ENCODE measurements at regions of chr6 and their contacts with region 1.

Region 1: DNA sequence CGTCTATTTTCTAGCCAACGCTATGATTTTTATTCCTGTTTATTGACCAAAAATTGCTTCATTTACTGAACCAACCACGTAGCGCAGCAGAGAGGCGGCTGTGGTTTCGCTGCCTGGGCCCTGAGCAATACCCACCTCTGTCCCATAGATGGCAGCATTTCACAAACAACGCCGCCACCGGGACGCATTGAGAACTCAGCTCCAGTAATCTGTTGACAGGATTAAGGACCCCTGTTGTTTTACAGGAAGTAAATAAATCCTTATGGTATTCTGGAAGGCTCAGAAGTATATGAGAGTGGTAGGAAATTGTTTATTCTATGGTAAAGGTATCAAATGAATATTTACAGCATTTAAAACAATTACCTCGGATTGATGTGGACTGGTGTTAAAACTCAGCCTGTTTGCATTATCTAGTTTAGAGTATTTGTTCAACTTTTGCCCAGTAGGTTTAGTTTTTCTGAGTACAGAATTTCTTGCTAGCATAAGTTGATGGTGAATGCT is 547.9 kb upstream of the SLC35B3 start:
- DNase-seq: peak; percentile 12 to 62 (median 25)
- ATAC-seq: peak; percentile 87
- H3K4me3 ChIP-seq: no peak overlapping the region
- H3K4me3 Mint-ChIP-seq: no peak overlapping the region
- H3K27ac ChIP-seq: no peak overlapping the region
- H3K27ac Mint-ChIP-seq: no peak overlapping the region
- H3K4me1 ChIP-seq: peaks cover 2% of the 10 kb centered on the region
- H3K4me1 Mint-ChIP-seq: no peaks in the 10 kb centered on the region
- H3K27me3 ChIP-seq: peaks cover 0 to 7% of the 10 kb centered on the region in 2 experiments
- H3K27me3 Mint-ChIP-seq: peaks cover 44% of the 10 kb centered on the region
- CTCF ChIP-seq: peak; percentile 99

Region 2: DNA sequence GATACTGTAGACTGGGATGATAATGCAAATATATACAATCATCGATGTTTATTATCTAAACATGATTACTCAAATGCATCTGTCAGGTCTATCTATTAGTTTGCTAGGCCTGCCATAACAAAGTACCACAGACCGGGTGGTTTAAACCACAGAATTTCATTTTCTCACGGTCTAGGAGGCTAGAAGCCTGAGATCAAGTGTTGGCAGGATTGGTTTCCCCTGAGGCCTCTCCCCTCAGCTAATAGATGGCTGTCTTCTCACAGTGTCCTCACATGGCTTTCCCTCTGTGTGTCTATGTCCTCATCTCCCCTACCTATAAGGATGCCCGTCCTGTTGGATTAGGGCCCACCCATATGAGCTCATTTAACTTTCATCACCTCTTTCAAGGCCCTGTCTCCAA is 35.3 kb before region 1 on chr6:
- CTCF ChIA-PET with region 1: no interaction called
- POLR2A ChIA-PET with region 1: no interaction called
- intact Hi-C with region 1: no loop called
- DNase-seq: no peak
- ATAC-seq: no peak
- H3K4me3 ChIP-seq: no peak overlapping the region
- H3K4me3 Mint-ChIP-seq: no peak overlapping the region
- H3K27ac ChIP-seq: no peak overlapping the region
- H3K27ac Mint-ChIP-seq: no peak overlapping the region
- H3K4me1 ChIP-seq: no peaks in the 10 kb centered on the region
- H3K4me1 Mint-ChIP-seq: no peaks in the 10 kb centered on the region
- H3K27me3 ChIP-seq: no peaks in the 10 kb centered on the region
- H3K27me3 Mint-ChIP-seq: peaks cover 8% of the 10 kb centered on the region
- CTCF ChIP-seq: no peak

Region 3: DNA sequence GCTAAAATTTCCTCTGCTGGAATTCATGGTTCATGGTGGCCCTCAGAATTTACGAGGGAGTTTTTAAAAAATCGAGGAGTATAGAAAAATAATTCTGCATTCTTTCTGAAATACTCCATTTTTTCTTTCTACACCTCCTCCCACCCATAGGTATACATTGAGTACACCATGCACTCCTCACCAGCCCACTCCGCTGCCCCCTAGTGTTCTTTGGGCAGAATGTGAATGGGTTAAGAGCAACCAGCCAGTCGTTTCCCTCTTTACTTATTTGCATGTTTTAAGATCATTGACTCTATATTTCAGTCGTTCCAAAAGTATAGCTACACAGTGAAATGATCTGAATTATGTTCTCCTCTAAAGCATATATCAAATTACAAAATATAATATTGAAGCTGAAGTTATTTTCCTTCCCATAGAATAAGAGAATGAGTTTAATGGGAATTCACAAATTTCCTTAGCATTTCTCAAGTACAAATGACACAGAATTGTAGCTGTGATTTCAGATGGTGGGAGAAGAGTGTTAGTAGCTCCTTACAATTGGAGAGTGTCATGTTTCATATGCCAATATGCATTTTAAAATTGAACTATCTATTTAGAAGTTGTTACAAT is 429.8 kb after region 1 on chr6:
- CTCF ChIA-PET with region 1: no interaction called
- POLR2A ChIA-PET with region 1: no interaction called
- intact Hi-C with region 1: loop called (anchors 1 kb)
- DNase-seq: peak in 2 of 14 experiments; percentile 1 to 11
- ATAC-seq: no peak
- H3K4me3 ChIP-seq: no peak overlapping the region
- H3K4me3 Mint-ChIP-seq: no peak overlapping the region
- H3K27ac ChIP-seq: no peak overlapping the region
- H3K27ac Mint-ChIP-seq: no peak overlapping the region
- H3K4me1 ChIP-seq: no peaks in the 10 kb centered on the region
- H3K4me1 Mint-ChIP-seq: no peaks in the 10 kb centered on the region
- H3K27me3 ChIP-seq: no peaks in the 10 kb centered on the region
- H3K27me3 Mint-ChIP-seq: peaks cover 5% of the 10 kb centered on the region
- CTCF ChIP-seq: peak; percentile 53

Region 4: GRCh38 chr6:9675122-9675521 is 691.9 kb after region 1 on chr6:
- CTCF ChIA-PET with region 1: no interaction called
- POLR2A ChIA-PET with region 1: no interaction called
- intact Hi-C with region 1: no loop called
- DNase-seq: no peak
- ATAC-seq: no peak
- H3K4me3 ChIP-seq: no peak overlapping the region
- H3K4me3 Mint-ChIP-seq: no peak overlapping the region
- H3K27ac ChIP-seq: no peak overlapping the region
- H3K27ac Mint-ChIP-seq: no peak overlapping the region
- H3K4me1 ChIP-seq: no peaks in the 10 kb centered on the region
- H3K4me1 Mint-ChIP-seq: no peaks in the 10 kb centered on the region
- H3K27me3 ChIP-seq: no peaks in the 10 kb centered on the region
- H3K27me3 Mint-ChIP-seq: no peaks in the 10 kb centered on the region
- CTCF ChIP-seq: no peak

Region 5: DNA sequence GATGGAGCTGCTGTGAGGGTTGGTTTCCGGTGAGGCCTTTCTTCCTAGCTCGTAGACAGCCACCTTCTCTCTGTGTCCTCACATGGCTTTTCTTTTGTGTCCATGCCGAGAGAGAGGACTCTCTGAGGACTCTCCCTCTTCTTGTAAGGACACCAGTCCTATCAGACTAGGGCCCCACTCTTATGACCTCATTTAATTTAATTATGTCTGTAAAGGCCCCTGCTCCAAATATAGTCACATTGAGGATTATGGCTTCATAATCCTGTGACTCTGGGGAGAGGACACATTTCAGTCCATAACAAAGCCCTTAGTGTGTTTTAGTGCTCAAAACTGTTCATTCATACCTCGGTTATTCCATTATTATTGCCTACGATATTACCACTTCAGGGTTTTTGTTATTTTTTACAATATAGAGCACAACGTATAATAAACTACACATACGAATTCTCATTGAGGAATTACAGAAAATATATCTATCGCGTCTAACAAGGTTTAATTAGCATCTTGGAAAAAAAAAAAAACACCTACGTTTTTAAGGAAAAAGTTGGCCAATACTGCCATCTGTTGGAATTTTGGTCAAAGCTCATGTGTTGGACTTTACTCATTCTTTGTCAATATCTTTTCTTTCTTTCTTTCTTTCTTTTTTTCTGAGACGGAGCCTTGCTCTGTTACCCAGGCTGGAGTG is 1451.6 kb after region 1 on chr6:
- CTCF ChIA-PET with region 1: interaction called, 5 read pairs
- POLR2A ChIA-PET with region 1: no interaction called
- intact Hi-C with region 1: loop called (anchors 1 to 2 kb)
- DNase-seq: peak in 3 of 14 experiments; percentile 25 to 57 (median 47)
- ATAC-seq: no peak
- H3K4me3 ChIP-seq: no peak overlapping the region
- H3K4me3 Mint-ChIP-seq: no peak overlapping the region
- H3K27ac ChIP-seq: no peak overlapping the region
- H3K27ac Mint-ChIP-seq: no peak overlapping the region
- H3K4me1 ChIP-seq: peaks cover 4% of the 10 kb centered on the region
- H3K4me1 Mint-ChIP-seq: peaks cover 9% of the 10 kb centered on the region
- H3K27me3 ChIP-seq: peaks cover 0 to 15% of the 10 kb centered on the region in 2 experiments
- H3K27me3 Mint-ChIP-seq: peaks cover 37% of the 10 kb centered on the region
- CTCF ChIP-seq: peak; percentile 56

Measured in CD4-positive, alpha-beta T cell (primary cell).